ENCODE measurements at regions of chr5 and their contacts with region 1.

Region 1: GRCh38 chr5:165457859-165458481 is 1952.6 kb downstream of the MAT2B start:
- DNase-seq: peak; percentile 40
- H3K4me3 ChIP-seq: no peak overlapping the region
- H3K27ac ChIP-seq: no peak overlapping the region
- H3K4me1 ChIP-seq: no peaks in the 10 kb centered on the region
- H3K27me3 ChIP-seq: no peaks in the 10 kb centered on the region
- CTCF ChIP-seq: peak; percentile 62

Region 2: GRCh38 chr5:165035520-165035919 is 422.4 kb before region 1 on chr5:
- CTCF ChIA-PET with region 1: no interaction called
- POLR2A ChIA-PET with region 1: no interaction called
- intact Hi-C with region 1: loop called (anchors 10 kb)
- DNase-seq: no peak
- H3K4me3 ChIP-seq: no peak overlapping the region
- H3K27ac ChIP-seq: no peak overlapping the region
- H3K4me1 ChIP-seq: no peaks in the 10 kb centered on the region
- H3K27me3 ChIP-seq: no peaks in the 10 kb centered on the region
- CTCF ChIP-seq: no peak

Region 3: GRCh38 chr5:165227511-165227910 is 230.5 kb before region 1 on chr5:
- CTCF ChIA-PET with region 1: no interaction called
- POLR2A ChIA-PET with region 1: no interaction called
- intact Hi-C with region 1: loop called (anchors 5 kb)
- DNase-seq: peak; percentile 5
- H3K4me3 ChIP-seq: no peak overlapping the region
- H3K27ac ChIP-seq: no peak overlapping the region
- H3K4me1 ChIP-seq: no peaks in the 10 kb centered on the region
- H3K27me3 ChIP-seq: peaks cover 7% of the 10 kb centered on the region
- CTCF ChIP-seq: 0 out of 2 replicates have a peak, but pooled peaks have one; percentile 19

Region 4: DNA sequence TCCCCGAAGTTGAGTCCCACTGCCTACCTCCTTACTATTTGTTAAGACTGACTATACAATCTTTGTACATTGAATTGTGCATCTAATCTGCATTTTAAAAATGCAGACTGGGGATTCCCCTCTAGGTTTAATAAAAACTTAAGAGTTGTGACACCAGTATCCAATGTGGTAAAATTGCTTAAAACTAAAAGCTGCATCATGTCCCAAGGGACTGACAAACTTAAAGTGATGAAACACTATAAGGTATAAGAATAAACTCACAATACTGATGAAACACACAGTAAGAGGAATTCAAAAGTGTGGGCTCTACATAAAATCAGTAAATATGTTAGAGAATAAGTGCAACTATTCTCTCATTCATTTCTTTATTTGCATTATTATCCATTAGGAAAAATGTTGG is 47.5 kb before region 1 on chr5:
- CTCF ChIA-PET with region 1: no interaction called
- POLR2A ChIA-PET with region 1: no interaction called
- intact Hi-C with region 1: no loop called
- DNase-seq: no peak
- H3K4me3 ChIP-seq: no peak overlapping the region
- H3K27ac ChIP-seq: no peak overlapping the region
- H3K4me1 ChIP-seq: no peaks in the 10 kb centered on the region
- H3K27me3 ChIP-seq: no peaks in the 10 kb centered on the region
- CTCF ChIP-seq: no peak

Measured in A673 (cell line).